ENCODE measurements at regions of chr7 and their contacts with region 1.

Region 1: GRCh38 chr7:121278120-121279021 is 50.4 kb upstream of the WNT16 start:
- DNase-seq: peak; percentile 86
- ATAC-seq: peak; percentile 94
- H3K4me3 ChIP-seq: no peak overlapping the region
- H3K27ac ChIP-seq: peak overlapping the region; percentile 64
- H3K4me1 ChIP-seq: peaks cover 13% of the 10 kb centered on the region
- H3K27me3 ChIP-seq: no peaks in the 10 kb centered on the region
- CTCF ChIP-seq: no peak
- EP300 ChIP-seq: peak; percentile 95 to 99
- POLR2A ChIP-seq: no peak
- RAD21 ChIP-seq: no peak

Region 2: GRCh38 chr7:121138262-121138933 is 140.0 kb before region 1 on chr7:
- CTCF ChIA-PET with region 1: no interaction called
- POLR2A ChIA-PET with region 1: no interaction called
- RAD21 ChIA-PET with region 1: interaction called, 3 read pairs
- SMC1A ChIA-PET with region 1: interaction called, 6 read pairs
- in situ Hi-C with region 1: no loop called
- intact Hi-C with region 1: loop called (anchors 5 kb)
- DNase-seq: peak; percentile 54
- ATAC-seq: peak; percentile 99
- H3K4me3 ChIP-seq: peak overlapping the region; percentile 50; the same call in 1 of the 2 replicates
- H3K27ac ChIP-seq: no peak overlapping the region
- H3K4me1 ChIP-seq: no peaks in the 10 kb centered on the region
- H3K27me3 ChIP-seq: no peaks in the 10 kb centered on the region
- CTCF ChIP-seq: no peak
- EP300 ChIP-seq: no peak
- POLR2A ChIP-seq: no peak
- RAD21 ChIP-seq: no peak

Region 3: GRCh38 chr7:121180436-121181063 is 97.8 kb before region 1 on chr7:
- CTCF ChIA-PET with region 1: interaction called, 4 read pairs
- POLR2A ChIA-PET with region 1: interaction called, 7 read pairs
- RAD21 ChIA-PET with region 1: interaction called, 8 read pairs
- SMC1A ChIA-PET with region 1: interaction called, 8 read pairs
- in situ Hi-C with region 1: no loop called
- intact Hi-C with region 1: loop called (anchors 1 kb)
- DNase-seq: peak; percentile 79
- ATAC-seq: peak; percentile 98
- H3K4me3 ChIP-seq: no peak overlapping the region
- H3K27ac ChIP-seq: peak overlapping the region; percentile 62
- H3K4me1 ChIP-seq: peaks cover 11% of the 10 kb centered on the region
- H3K27me3 ChIP-seq: no peaks in the 10 kb centered on the region
- CTCF ChIP-seq: no peak
- EP300 ChIP-seq: peak; percentile 90 to 93; a peak in 3 of 4 replicates
- POLR2A ChIP-seq: no peak
- RAD21 ChIP-seq: no peak

Region 4: GRCh38 chr7:121259826-121260225 is 18.5 kb before region 1 on chr7:
- CTCF ChIA-PET with region 1: interaction called, 3 read pairs
- POLR2A ChIA-PET with region 1: interaction called, 3 read pairs
- RAD21 ChIA-PET with region 1: no interaction called
- SMC1A ChIA-PET with region 1: interaction called, 12 read pairs
- in situ Hi-C with region 1: no loop called
- intact Hi-C with region 1: no loop called
- DNase-seq: no peak
- ATAC-seq: no peak
- H3K4me3 ChIP-seq: no peak overlapping the region
- H3K27ac ChIP-seq: no peak overlapping the region
- H3K4me1 ChIP-seq: no peaks in the 10 kb centered on the region
- H3K27me3 ChIP-seq: no peaks in the 10 kb centered on the region; a peak in 1 of 4 replicates
- CTCF ChIP-seq: no peak
- EP300 ChIP-seq: no peak
- POLR2A ChIP-seq: no peak
- RAD21 ChIP-seq: no peak

Region 5: GRCh38 chr7:121294448-121294992 is 16.1 kb after region 1 on chr7:
- CTCF ChIA-PET with region 1: interaction called, 4 read pairs
- POLR2A ChIA-PET with region 1: no interaction called
- RAD21 ChIA-PET with region 1: interaction called, 8 read pairs
- SMC1A ChIA-PET with region 1: interaction called, 17 read pairs
- in situ Hi-C with region 1: no loop called
- intact Hi-C with region 1: no loop called
- DNase-seq: no peak
- ATAC-seq: no peak
- H3K4me3 ChIP-seq: no peak overlapping the region
- H3K27ac ChIP-seq: no peak overlapping the region
- H3K4me1 ChIP-seq: no peaks in the 10 kb centered on the region
- H3K27me3 ChIP-seq: no peaks in the 10 kb centered on the region
- CTCF ChIP-seq: no peak
- EP300 ChIP-seq: no peak
- POLR2A ChIP-seq: no peak
- RAD21 ChIP-seq: no peak

Region 6: DNA sequence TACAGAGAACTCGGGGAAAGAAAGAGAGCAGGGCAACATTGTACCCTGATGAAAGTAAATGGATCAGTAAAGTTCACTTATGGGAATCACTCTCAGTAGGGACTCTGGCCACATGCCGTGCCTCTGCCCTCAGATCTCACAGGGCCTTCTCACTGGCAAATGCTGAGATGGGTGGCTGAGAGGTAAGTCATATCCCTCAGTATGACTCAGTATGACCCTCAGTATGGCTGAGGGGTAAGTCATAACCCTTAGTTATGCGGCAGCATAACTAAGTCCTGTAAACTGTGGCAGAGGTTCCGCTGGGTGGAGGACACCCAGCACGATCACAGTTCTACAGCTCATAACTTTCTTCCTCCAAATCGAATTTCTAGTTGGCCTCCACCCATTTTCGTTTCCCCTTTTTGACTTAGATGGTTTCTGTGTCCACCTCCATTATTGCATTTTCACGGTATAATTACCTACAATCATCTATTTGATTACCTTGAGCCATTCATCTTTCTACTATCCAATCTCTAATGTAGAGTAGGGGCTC is 23.9 kb after region 1 on chr7:
- CTCF ChIA-PET with region 1: interaction called, 4 read pairs
- POLR2A ChIA-PET with region 1: interaction called, 4 read pairs
- RAD21 ChIA-PET with region 1: interaction called, 8 read pairs
- SMC1A ChIA-PET with region 1: interaction called, 12 read pairs
- in situ Hi-C with region 1: no loop called
- intact Hi-C with region 1: loop called (anchors 2 kb)
- DNase-seq: no peak
- ATAC-seq: peak; percentile 97
- H3K4me3 ChIP-seq: no peak overlapping the region
- H3K27ac ChIP-seq: no peak overlapping the region
- H3K4me1 ChIP-seq: peaks cover 29% of the 10 kb centered on the region
- H3K27me3 ChIP-seq: no peaks in the 10 kb centered on the region
- CTCF ChIP-seq: no peak
- EP300 ChIP-seq: peak in 1 of 2 experiments; percentile 67; a peak in 1 of 4 replicates
- POLR2A ChIP-seq: no peak
- RAD21 ChIP-seq: no peak

Region 7: GRCh38 chr7:121313793-121314676 is 35.7 kb after region 1 on chr7:
- CTCF ChIA-PET with region 1: interaction called, 10 read pairs
- POLR2A ChIA-PET with region 1: interaction called, 3 read pairs
- RAD21 ChIA-PET with region 1: interaction called, 17 read pairs
- SMC1A ChIA-PET with region 1: interaction called, 10 read pairs
- in situ Hi-C with region 1: no loop called
- intact Hi-C with region 1: no loop called
- DNase-seq: peak; percentile 50
- ATAC-seq: peak; percentile 91
- H3K4me3 ChIP-seq: no peak overlapping the region
- H3K27ac ChIP-seq: no peak overlapping the region
- H3K4me1 ChIP-seq: peaks cover 12% of the 10 kb centered on the region
- H3K27me3 ChIP-seq: no peaks in the 10 kb centered on the region
- CTCF ChIP-seq: no peak
- EP300 ChIP-seq: peak; percentile 74 to 85; a peak in 3 of 4 replicates
- POLR2A ChIP-seq: no peak
- RAD21 ChIP-seq: 0 out of 2 replicates have a peak, but pooled peaks have one; percentile 12

Measured in GM12878 (cell line).